ENCODE measurements at regions of chr12 and their contacts with region 1.

Region 1: DNA sequence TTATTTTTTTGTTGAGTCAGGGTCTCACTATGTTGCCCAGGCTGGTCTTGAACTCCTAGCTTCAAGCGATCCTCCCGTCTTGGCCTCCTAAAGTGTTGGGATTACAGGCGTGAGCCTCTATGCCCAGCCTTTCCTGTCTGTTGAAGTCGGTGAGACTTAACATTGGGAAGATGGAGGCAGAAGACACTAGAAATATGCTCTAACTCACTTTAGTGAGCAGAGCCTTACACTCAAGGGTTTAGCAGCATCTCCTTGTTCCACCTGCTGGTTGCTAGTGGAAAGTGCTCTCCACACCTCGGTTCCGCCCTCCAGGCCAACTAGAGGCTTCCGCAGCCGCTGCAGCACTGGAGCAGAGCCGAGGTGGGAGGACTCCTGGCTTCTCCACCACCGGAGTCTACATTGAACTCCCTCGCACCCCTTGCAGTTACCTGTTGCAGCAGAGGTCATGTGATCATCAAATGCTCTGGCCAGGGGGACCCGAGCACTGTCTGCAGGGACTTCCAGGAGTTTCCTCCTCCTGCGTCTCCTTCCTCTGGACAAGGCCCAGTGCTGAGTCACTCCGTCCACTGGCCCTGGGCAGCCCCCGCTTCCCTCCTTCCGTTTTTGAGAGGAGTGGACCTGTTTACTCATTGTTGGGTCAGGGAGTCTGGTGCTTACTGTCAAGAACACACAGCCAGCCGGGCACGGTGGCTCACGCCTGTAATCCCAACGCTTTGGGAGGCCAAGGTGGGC is 9.4 kb upstream of the HVCN1 start:
- DNase-seq: peak; percentile 79 to 84
- ATAC-seq: peak; percentile 68 to 91 (median 86)
- H3K4me3 ChIP-seq: peak overlapping the region in 5 of 10 donors; percentile 23 to 44 (median 31)
- H3K27ac ChIP-seq: peak overlapping the region in 8 of 10 donors; percentile 21 to 73 (median 52)
- H3K4me1 ChIP-seq: peaks cover 9 to 54% (median 28%) of the 10 kb centered on the region in 9 donors
- H3K27me3 ChIP-seq: no peaks in the 10 kb centered on the region
- CTCF ChIP-seq: peak; percentile 48 to 89 (median 76)

Region 2: DNA sequence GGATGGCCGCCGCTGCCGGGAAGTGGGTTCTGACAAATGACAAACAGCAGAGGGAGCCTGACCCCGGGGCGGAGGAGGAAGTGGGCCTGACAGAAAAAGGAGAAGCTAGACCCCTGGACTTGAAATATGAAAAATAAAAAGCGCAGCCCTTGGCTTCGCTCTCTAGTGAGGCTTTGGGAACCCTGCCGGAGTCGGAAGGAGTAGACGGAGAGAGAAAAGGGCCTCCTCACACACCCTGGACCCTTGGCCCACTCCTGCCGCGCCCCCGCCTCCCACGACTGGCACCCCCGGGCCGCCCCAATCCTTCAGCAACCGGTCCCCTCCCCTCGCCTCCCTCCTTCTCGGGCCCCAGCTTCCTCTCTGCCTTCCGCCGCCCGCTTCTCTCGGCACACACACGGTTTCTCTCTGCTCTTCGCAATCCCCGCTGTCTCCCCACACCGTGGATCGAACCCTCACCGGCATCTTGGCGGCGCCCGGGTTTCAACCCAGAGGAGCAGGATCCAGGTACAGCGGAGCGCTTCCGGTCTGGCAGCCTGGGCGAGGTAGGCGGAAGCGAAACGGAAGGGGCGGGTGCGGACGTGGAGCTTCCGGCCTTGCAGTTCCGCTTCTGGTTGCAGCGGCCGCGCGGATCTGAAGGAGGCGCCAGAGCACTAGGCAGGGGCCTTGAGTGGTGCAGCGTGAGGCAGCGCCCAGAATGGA is 248.4 kb before region 1 on chr12 and contains the start of gene ARPC3:
- intact Hi-C with region 1: loop called in 2 of 10 experiments (anchors 1 kb)
- DNase-seq: peak; percentile 94 to 95
- ATAC-seq: peak; percentile 98 to 100 (median 99)
- H3K4me3 ChIP-seq: peak within 1 kb of the TSS; percentile 61 to 95 (median 81)
- H3K27ac ChIP-seq: peak within 1 kb of the TSS; percentile 80 to 99 (median 94)
- H3K4me1 ChIP-seq: peaks cover 0 to 49% (median 22%) of the 10 kb centered on the region in 9 donors
- H3K27me3 ChIP-seq: no peaks in the 10 kb centered on the region
- CTCF ChIP-seq: peak; percentile 69 to 97 (median 88)
- total RNA-seq, gene ARPC3: 71.9 to 168 (median 82.6) TPM

Region 3: GRCh38 chr12:110501752-110502738 is 196.3 kb before region 1 on chr12 and contains the starts of genes RAD9B and VPS29:
- intact Hi-C with region 1: loop called in 1 of 10 experiments (anchors 10 kb)
- DNase-seq: peak; percentile 98 to 99
- ATAC-seq: peak; percentile 97 to 100 (median 99)
- H3K4me3 ChIP-seq: peak within 1 kb of the TSS; percentile 70 to 98 (median 85)
- H3K27ac ChIP-seq: peak within 1 kb of the TSS; percentile 59 to 95 (median 91)
- H3K4me1 ChIP-seq: peaks cover 0 to 40% (median 35%) of the 10 kb centered on the region in 9 donors
- H3K27me3 ChIP-seq: no peaks in the 10 kb centered on the region
- CTCF ChIP-seq: no peak
- total RNA-seq, gene RAD9B: 0.23 to 1.6 (median 0.95) TPM
- total RNA-seq, gene VPS29: 83.7 to 117 (median 91.5) TPM

Region 4: DNA sequence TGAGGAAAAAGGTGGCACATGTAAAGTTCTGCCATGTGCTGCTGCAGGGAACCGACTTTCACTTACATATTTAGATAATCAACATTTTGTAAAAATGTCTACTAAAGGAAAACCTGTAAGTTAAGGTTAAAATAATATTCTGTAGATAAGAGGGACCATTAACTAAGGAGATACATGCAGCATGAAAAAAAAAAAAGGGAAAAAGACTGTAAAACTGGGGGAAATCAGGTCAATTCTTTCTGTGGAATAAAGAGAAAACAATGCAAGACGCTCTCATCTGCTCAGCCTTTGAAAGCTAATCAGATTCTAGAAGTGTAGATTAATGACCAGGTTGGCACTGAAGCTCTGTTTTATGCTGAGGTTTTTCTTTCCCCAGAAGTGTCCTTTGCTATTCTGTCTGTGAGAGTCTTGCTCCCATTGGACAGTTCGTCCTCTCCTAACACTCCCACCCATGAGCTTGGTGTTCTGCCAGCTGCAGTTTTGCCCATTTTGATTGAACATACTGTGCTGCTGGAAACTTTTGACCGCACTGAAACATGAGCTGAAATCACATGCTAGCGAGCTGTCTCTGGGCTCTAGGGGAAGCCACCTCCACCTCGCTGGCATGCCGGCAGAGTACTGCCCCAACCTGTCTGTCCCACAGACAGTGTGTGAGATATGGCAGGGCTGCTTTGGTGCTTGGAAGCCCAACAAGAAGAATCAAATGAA is 154.9 kb before region 1 on chr12:
- intact Hi-C with region 1: no loop called
- DNase-seq: peak; percentile 71 to 86
- ATAC-seq: peak; percentile 37 to 96 (median 85)
- H3K4me3 ChIP-seq: no peak overlapping the region
- H3K27ac ChIP-seq: peak overlapping the region; percentile 35 to 83 (median 66)
- H3K4me1 ChIP-seq: peaks cover 12 to 75% (median 53%) of the 10 kb centered on the region in 9 donors
- H3K27me3 ChIP-seq: no peaks in the 10 kb centered on the region
- CTCF ChIP-seq: no peak

Region 5: GRCh38 chr12:110590806-110591326 is 107.5 kb before region 1 on chr12:
- intact Hi-C with region 1: no loop called
- DNase-seq: no peak
- ATAC-seq: peak in 7 of 8 donors; percentile 62 to 84 (median 68)
- H3K4me3 ChIP-seq: no peak overlapping the region
- H3K27ac ChIP-seq: peak overlapping the region in 9 of 10 donors; percentile 31 to 91 (median 68)
- H3K4me1 ChIP-seq: peaks cover 0 to 37% (median 14%) of the 10 kb centered on the region in 9 donors
- H3K27me3 ChIP-seq: no peaks in the 10 kb centered on the region
- CTCF ChIP-seq: no peak

Region 6: DNA sequence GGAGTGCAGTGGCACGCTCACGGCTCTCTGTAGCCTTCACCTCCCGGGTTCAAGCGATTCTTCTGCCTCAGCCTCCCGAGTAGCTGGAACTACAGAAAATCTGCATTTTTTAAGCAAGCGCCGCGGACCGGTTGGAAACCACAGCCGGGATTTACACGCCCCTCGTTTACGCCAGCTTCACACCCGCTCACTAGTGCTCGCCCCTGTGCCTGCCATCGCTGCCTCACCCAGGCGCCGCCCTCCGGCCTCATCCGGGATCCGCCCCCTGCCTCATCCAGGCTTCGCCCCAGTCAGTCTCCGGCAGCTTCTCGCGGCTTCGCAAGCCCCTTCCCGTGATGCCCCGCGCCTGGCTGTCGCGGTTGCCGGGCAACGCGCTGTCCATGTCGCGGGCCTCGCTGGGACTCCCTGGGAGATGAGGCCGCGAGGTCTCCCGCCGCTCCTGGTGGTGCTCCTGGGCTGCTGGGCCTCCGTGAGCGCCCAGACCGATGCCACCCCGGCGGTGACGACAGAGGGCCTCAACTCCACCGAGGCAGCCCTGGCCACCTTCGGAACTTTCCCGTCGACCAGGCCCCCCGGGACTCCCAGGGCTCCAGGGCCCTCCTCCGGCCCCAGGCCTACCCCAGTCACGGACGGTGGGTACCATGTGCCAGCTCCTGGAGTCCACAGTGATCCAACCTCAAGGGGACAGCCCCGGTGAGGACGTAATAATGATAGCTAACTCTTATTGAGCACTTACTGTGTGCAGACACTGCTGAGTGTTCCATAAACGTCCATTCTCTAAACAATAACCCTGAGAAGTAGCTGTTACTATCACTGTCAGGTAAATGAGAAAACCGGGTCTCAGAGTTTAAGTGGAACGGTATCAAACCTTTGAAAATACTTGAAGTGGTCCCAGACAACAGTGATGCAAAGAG is 84.3 kb before region 1 on chr12 and contains the start of gene TCTN1:
- intact Hi-C with region 1: loop called in 6 of 10 experiments (anchors 5 to 10 kb)
- DNase-seq: peak; percentile 97 to 98
- ATAC-seq: peak; percentile 98 to 100 (median 99)
- H3K4me3 ChIP-seq: peak within 1 kb of the TSS; percentile 50 to 86 (median 72)
- H3K27ac ChIP-seq: peak within 1 kb of the TSS in 9 of 10 donors; percentile 52 to 88 (median 76)
- H3K4me1 ChIP-seq: peaks cover 0 to 19% (median 7%) of the 10 kb centered on the region in 9 donors
- H3K27me3 ChIP-seq: no peaks in the 10 kb centered on the region
- CTCF ChIP-seq: peak in 4 of 9 donors; percentile 9 to 33 (median 23)
- total RNA-seq, gene TCTN1: 14.2 to 31.9 (median 25.2) TPM

Region 7: DNA sequence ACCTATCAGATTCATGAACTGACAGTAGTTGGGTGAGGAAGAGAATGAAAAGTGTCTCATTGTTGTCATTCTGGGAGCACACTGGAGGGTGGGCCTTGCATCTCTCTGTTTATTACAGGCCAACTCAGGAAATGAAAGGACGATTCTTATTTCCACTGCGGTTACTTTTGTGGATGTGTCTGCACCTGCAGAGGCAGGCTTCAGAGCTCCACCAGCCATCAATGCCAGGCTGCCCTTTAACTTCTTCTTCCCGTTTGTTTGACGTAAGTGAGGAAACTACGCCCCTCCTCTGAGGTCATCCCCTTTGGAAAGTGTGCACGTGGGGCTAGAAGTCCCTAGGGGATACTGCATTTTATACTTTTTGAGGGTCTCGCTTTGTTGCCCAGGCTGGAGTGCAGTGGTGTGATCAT is 50.7 kb before region 1 on chr12:
- intact Hi-C with region 1: loop called in 1 of 10 experiments (anchors 5 kb)
- DNase-seq: no peak
- ATAC-seq: peak in 2 of 8 donors; percentile 46 to 54
- H3K4me3 ChIP-seq: no peak overlapping the region
- H3K27ac ChIP-seq: peak overlapping the region in 1 of 10 donors; percentile 44
- H3K4me1 ChIP-seq: peaks cover 0 to 9% (median 0%) of the 10 kb centered on the region in 9 donors
- H3K27me3 ChIP-seq: no peaks in the 10 kb centered on the region
- CTCF ChIP-seq: no peak

Region 8: GRCh38 chr12:110826592-110827200 is 128.4 kb after region 1 on chr12:
- intact Hi-C with region 1: loop called in 2 of 10 experiments (anchors 5 to 10 kb)
- DNase-seq: peak; percentile 86 to 87
- ATAC-seq: peak; percentile 92 to 97 (median 94)
- H3K4me3 ChIP-seq: peak overlapping the region in 4 of 10 donors; percentile 23 to 37 (median 30)
- H3K27ac ChIP-seq: no peak overlapping the region
- H3K4me1 ChIP-seq: peaks cover 0 to 6% (median 0%) of the 10 kb centered on the region in 9 donors
- H3K27me3 ChIP-seq: no peaks in the 10 kb centered on the region
- CTCF ChIP-seq: peak; percentile 60 to 87 (median 78)

Measured in heart right ventricle (tissue), 16 donors.